Activated T-helper 1 cell treated with anti-CD3 and anti-CD28 coated beads, Interleukin-12 subunit alpha, Interleukin-12 subunit beta, Interleukin-2, Interleukin-4 antibody, amounts not matched to agents 30 ng/mL and 10 ng/mL and 1 ng/mL, durations not matched to agents 14 hours and 24 hours and 36 hours (primary cell): ENCODE measurements at regions of chr10 and their contacts with region 1.

Region 1: GRCh38 chr10:5692461-5693358 is 8.1 kb downstream of the TASOR2 start:
- DNase-seq: peak; percentile 69
- H3K4me3 Mint-ChIP-seq: peak overlapping the region; percentile 73
- H3K27ac Mint-ChIP-seq: peak overlapping the region; percentile 74
- H3K4me1 Mint-ChIP-seq: peaks cover 67% of the 10 kb centered on the region
- H3K27me3 Mint-ChIP-seq: no peaks in the 10 kb centered on the region

Region 2: DNA sequence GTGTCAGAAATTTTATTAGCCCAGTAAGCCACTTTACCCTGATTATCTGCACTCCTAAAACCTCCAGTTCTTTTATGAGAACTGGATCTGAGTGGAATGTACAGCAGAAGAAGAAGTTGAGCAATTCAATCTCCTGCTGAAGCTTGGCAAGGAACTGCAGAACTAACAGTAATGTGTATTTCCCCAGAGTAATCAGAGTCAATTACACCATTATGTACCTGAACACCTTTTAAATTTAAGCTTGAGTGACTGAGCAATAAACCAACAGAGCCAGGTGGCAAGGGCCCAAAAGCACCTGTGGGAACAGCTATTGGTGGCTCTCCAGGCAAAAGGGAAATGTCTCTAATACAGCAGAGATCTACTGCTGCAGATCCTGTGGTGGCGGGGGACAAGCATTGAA is 649.0 kb before region 1 on chr10:
- intact Hi-C with region 1: no loop called
- DNase-seq: no peak
- H3K4me3 Mint-ChIP-seq: no peak overlapping the region
- H3K27ac Mint-ChIP-seq: no peak overlapping the region
- H3K4me1 Mint-ChIP-seq: no peaks in the 10 kb centered on the region
- H3K27me3 Mint-ChIP-seq: no peaks in the 10 kb centered on the region

Region 3: DNA sequence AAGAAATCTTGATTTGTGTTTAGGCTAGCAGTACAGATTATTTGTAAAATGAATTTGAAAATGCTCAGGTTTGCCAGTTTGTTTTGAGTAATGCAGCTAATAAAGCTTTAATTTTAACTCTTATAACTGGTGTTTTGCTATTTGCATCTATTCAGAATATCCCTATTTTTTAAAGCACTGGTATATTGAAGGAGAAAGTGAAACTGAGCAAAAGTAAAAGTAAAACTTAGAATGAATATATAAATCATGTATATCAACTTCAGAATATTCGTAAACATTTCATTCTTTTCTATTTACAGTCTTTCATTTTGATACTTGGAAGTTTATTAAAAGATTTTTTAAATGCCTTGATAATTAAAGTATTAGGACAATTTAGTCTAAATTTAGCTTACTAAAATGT is 18.1 kb after region 1 on chr10:
- intact Hi-C with region 1: loop called (anchors 2 kb)
- DNase-seq: no peak
- H3K4me3 Mint-ChIP-seq: peak overlapping the region; percentile 52
- H3K27ac Mint-ChIP-seq: no peak overlapping the region
- H3K4me1 Mint-ChIP-seq: peaks cover 45% of the 10 kb centered on the region
- H3K27me3 Mint-ChIP-seq: no peaks in the 10 kb centered on the region

Region 4: DNA sequence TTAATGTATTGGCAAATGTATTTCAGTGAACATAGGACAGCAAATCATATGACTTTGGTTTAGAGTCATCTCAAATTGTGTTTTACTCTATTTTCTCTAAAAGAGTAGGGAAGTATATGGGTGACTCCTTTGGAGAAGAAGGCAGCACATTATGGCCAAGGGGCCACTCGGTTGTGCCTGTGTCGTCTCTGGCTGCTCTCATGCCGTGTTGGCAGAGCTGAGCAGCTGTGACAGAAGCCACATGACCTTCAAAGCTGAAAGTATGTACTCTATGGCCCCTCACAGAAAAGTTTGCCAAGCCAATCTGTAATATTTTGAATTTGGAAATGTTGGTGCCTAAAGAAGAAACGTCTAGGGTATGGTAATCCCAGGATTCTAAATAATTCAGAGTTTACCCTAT is 39.4 kb after region 1 on chr10:
- intact Hi-C with region 1: loop called (anchors 2 kb)
- DNase-seq: no peak
- H3K4me3 Mint-ChIP-seq: no peak overlapping the region
- H3K27ac Mint-ChIP-seq: peak overlapping the region; percentile 46
- H3K4me1 Mint-ChIP-seq: peaks cover 43% of the 10 kb centered on the region
- H3K27me3 Mint-ChIP-seq: no peaks in the 10 kb centered on the region

Region 5: GRCh38 chr10:6072215-6072934 is 379.7 kb after region 1 on chr10:
- intact Hi-C with region 1: no loop called
- DNase-seq: peak; percentile 29
- H3K4me3 Mint-ChIP-seq: peak overlapping the region; percentile 59
- H3K27ac Mint-ChIP-seq: peak overlapping the region; percentile 97
- H3K4me1 Mint-ChIP-seq: peaks cover 80% of the 10 kb centered on the region
- H3K27me3 Mint-ChIP-seq: no peaks in the 10 kb centered on the region